ENCODE measurements at regions of chr12 and their contacts with region 1.

Region 1: GRCh38 chr12:8823565-8824300 is 1.3 kb downstream of the A2ML1 start:
- DNase-seq: peak; percentile 6
- ATAC-seq: peak; percentile 81
- H3K4me3 ChIP-seq: no peak overlapping the region
- H3K27ac ChIP-seq: no peak overlapping the region
- H3K4me1 ChIP-seq: no peaks in the 10 kb centered on the region
- H3K27me3 ChIP-seq: no peaks in the 10 kb centered on the region
- CTCF ChIP-seq: peak; percentile 37 to 74 (median 63); a peak in 5 of 6 replicates
- POLR2A ChIP-seq: no peak
- RAD21 ChIP-seq: peak; percentile 66

Region 2: DNA sequence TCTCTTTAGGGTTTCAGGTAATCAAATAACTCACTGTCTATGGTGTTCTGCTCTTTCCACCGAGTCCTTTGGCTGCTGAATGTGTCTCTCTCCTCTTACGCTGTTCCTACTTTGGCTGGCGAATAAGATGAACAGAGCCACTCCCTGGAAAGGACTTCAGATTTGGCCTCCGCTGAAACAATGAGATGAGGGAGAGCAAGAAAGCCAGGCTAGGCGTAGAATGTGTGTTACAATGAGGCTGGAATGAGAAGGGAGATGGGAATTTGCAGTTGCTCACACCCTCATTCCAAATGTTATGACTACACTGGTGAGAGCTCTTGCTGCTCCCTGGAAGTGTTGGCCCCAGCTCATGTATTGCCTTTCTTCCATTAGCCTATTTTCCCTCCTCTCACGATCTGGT is 161.1 kb before region 1 on chr12 and contains the start of gene MFAP5:
- CTCF ChIA-PET with region 1: interaction called, 26 read pairs
- POLR2A ChIA-PET with region 1: no interaction called
- RAD21 ChIA-PET with region 1: no interaction called
- intact Hi-C with region 1: no loop called
- DNase-seq: no peak
- ATAC-seq: no peak
- H3K4me3 ChIP-seq: no peak within 1 kb of the TSS
- H3K27ac ChIP-seq: no peak within 1 kb of the TSS
- H3K4me1 ChIP-seq: 0 out of 4 replicates have a peak, but pooled peaks cover 0 to 3% of the 10 kb centered on the region in 2 experiments
- H3K27me3 ChIP-seq: peaks cover 16% of the 10 kb centered on the region
- CTCF ChIP-seq: no peak
- POLR2A ChIP-seq: no peak
- RAD21 ChIP-seq: no peak
- total RNA-seq, gene MFAP5: not detected

Region 3: GRCh38 chr12:8681041-8681902 is 142.5 kb before region 1 on chr12:
- CTCF ChIA-PET with region 1: interaction called, 14 read pairs
- POLR2A ChIA-PET with region 1: no interaction called
- RAD21 ChIA-PET with region 1: interaction called in 1 of 2 experiments, 3 read pairs
- intact Hi-C with region 1: loop called (anchors 2 kb)
- DNase-seq: no peak
- ATAC-seq: 0 out of 2 replicates have a peak, but pooled peaks have one; percentile 11
- H3K4me3 ChIP-seq: no peak overlapping the region
- H3K27ac ChIP-seq: no peak overlapping the region
- H3K4me1 ChIP-seq: peaks cover 2% of the 10 kb centered on the region in 2 experiments; a peak in 1 of 4 replicates
- H3K27me3 ChIP-seq: no peaks in the 10 kb centered on the region
- CTCF ChIP-seq: no peak
- POLR2A ChIP-seq: no peak
- RAD21 ChIP-seq: no peak

Region 4: DNA sequence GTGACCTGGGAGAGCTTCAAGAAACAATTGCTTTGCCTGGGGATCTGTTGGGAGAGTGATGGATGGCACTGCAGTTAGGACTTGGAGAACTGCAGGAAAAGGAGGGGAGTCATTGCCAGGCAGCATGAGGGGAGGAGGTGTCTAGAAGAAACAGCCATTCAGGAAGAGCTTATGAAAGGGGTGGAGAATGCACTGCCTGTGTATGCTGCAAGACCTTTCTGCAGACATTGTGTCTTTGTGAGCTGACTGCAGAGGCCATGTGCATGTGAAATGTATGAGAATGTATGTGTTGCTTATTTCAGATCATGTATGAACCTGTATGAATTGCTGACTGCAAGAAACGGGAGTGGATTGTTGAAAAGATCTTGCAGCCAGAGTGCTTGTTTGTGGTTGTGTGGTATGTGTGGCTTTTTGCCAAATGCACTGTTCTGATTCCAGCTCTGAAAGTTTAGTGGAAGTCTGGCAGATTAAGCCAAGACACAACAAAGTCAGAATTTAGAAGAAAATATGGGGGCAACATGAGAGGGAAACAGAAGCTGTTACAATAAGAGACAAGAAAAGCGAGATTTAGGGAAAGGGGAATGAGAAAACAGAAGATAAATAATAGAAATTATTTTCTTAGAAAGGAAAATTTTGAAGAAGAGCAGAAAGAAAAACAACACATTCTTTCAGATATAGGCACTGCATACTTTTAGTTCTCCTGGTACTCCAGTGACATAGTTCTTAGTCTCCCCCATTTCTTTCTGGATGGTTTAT is 135.7 kb before region 1 on chr12:
- CTCF ChIA-PET with region 1: no interaction called
- POLR2A ChIA-PET with region 1: no interaction called
- RAD21 ChIA-PET with region 1: no interaction called
- intact Hi-C with region 1: loop called (anchors 2 kb)
- DNase-seq: peak; percentile 27
- ATAC-seq: peak; percentile 87
- H3K4me3 ChIP-seq: no peak overlapping the region
- H3K27ac ChIP-seq: no peak overlapping the region
- H3K4me1 ChIP-seq: peaks cover 4 to 10% of the 10 kb centered on the region in 2 experiments; a peak in 3 of 4 replicates
- H3K27me3 ChIP-seq: 0 out of 2 replicates have a peak, but pooled peaks cover 12% of the 10 kb centered on the region
- CTCF ChIP-seq: no peak
- POLR2A ChIP-seq: no peak
- RAD21 ChIP-seq: no peak

Measured in HCT116 (cell line).